Right cardiac atrium (tissue), 5 donors: ENCODE measurements at regions of chr13 and their contacts with region 1.

Region 1: DNA sequence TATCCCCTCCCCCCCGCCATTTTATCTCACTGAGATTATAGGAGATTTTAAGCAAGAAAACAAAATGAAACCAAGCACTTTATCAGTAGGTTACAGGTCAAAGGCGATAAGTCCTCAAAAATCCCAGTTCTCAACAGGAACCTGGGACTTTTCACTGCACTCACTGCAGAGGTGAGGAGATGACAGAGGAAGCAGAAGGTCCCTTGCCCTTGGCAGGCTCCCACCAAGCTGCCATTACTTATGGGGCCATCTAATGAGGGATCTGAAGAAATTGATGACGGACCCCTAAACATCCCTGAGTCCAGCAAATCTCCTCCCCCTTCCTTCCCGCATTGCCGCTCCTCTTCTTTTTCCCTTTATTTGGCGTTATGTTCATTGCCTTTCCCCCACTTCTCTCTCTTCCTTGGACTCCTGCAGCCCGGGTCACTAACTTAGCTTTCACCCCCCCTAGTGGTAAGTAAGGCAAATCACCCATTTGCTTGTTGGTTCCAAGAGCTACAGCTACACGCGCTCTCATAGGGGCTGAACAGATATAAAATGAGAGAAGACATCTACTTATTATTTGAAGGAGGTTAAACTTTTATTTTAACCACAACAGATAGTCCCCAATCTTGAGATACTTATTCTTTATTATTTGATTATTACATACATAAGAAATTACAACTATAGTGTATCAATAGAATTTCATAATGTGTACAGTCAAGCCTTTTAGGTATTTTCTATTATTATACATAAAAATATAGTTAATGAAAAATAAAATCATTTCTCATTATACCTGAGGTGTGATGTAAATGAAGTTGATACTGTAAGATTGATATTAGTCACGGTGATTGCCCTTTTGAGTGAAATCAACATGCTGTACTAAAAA is 52.0 kb upstream of the ARGLU1 start:
- DNase-seq: peak in 1 of 3 donors; percentile 52
- ATAC-seq: peak; percentile 91
- H3K4me3 ChIP-seq: peak overlapping the region; percentile 14
- H3K27ac ChIP-seq: peak overlapping the region; percentile 42
- H3K4me1 ChIP-seq: no peaks in the 10 kb centered on the region
- H3K27me3 ChIP-seq: no peaks in the 10 kb centered on the region

Region 2: GRCh38 chr13:107124129-107124718 is 504.3 kb after region 1 on chr13:
- intact Hi-C with region 1: loop called in 1 of 4 experiments (anchors 10 kb)
- DNase-seq: no peak
- ATAC-seq: no peak
- H3K4me3 ChIP-seq: no peak overlapping the region
- H3K27ac ChIP-seq: no peak overlapping the region
- H3K4me1 ChIP-seq: peaks cover 1% of the 10 kb centered on the region
- H3K27me3 ChIP-seq: no peaks in the 10 kb centered on the region